ENCODE measurements at regions of chr22 and their contacts with region 1.

Region 1: GRCh38 chr22:31262312-31263080 is 29.8 kb downstream of the PIK3IP1 start:
- DNase-seq: no peak
- H3K4me3 ChIP-seq: no peak overlapping the region
- H3K27ac ChIP-seq: no peak overlapping the region
- H3K4me1 ChIP-seq: peaks cover 13% of the 10 kb centered on the region
- H3K27me3 ChIP-seq: no peaks in the 10 kb centered on the region
- CTCF ChIP-seq: no peak

Region 2: GRCh38 chr22:29954203-29954855 is 1308.2 kb before region 1 on chr22:
- CTCF ChIA-PET with region 1: no interaction called
- POLR2A ChIA-PET with region 1: no interaction called
- intact Hi-C with region 1: no loop called
- DNase-seq: no peak
- H3K4me3 ChIP-seq: no peak overlapping the region
- H3K27ac ChIP-seq: no peak overlapping the region
- H3K4me1 ChIP-seq: peaks cover 14% of the 10 kb centered on the region; the same call in 1 of the 2 replicates
- H3K27me3 ChIP-seq: no peaks in the 10 kb centered on the region
- CTCF ChIP-seq: no peak

Region 3: GRCh38 chr22:31846161-31847115 is 583.9 kb after region 1 on chr22:
- CTCF ChIA-PET with region 1: interaction called, 14 read pairs
- POLR2A ChIA-PET with region 1: no interaction called
- intact Hi-C with region 1: no loop called
- DNase-seq: no peak
- H3K4me3 ChIP-seq: no peak overlapping the region
- H3K27ac ChIP-seq: no peak overlapping the region
- H3K4me1 ChIP-seq: no peaks in the 10 kb centered on the region
- H3K27me3 ChIP-seq: no peaks in the 10 kb centered on the region
- CTCF ChIP-seq: peak; percentile 45